ENCODE measurements at regions of chr2 and their contacts with region 1.

Region 1: GRCh38 chr2:100242891-100243619 is 79.2 kb downstream of the LONRF2 start:
- DNase-seq: peak in 1 of 2 donors; percentile 90
- H3K4me3 ChIP-seq: no peak overlapping the region
- CTCF ChIP-seq: no peak
- POLR2A ChIP-seq: no peak

Region 2: DNA sequence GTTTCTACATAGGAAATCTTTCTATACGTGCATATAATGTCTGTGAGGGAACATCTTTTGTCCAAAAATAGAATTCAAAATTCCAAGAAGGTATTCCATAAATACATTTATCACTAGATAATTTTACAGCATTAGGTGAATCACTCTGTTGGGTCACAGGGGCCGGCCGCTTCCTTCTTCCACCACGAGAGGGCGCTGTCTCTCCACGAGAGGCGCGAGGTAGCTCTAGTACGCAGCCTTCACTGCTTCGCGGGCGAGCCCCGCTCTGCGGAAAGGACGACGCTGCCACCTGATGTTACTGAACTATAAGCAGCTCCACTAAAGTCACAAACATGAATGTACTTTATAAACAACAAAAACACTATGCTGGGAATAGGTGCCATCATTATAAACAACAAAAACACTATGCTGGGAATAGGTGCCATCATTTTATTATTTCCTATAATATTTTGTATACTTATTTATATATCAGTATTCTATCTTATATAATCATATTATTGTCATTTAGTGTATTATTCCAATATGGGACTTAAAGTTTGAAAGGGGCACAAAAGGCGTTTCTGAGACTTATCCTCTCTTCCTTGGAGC is 683.9 kb before region 1 on chr2:
- intact Hi-C with region 1: loop called (anchors 5 kb)
- DNase-seq: peak; percentile 85 to 98
- H3K4me3 ChIP-seq: no peak overlapping the region
- CTCF ChIP-seq: peak in 1 of 3 donors; percentile 88
- POLR2A ChIP-seq: no peak

Region 3: DNA sequence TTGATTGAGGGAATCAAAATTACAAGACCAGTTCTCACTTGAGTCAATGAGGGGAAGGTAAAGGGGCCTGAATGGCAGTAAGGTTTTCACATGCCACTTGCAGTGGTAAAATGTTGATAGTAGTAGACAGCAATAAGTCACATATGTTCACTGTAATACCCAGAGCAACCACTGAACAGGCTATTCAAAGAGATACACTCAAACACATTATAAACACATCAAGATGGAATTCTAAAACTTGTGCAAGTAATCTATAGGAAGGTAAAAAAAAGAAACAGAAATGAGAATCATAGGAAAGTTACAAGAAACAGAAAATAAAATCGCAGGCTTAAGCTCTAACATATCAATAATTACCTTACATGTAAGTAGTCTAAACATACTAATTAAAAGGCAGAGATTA is 14.1 kb before region 1 on chr2:
- intact Hi-C with region 1: no loop called
- DNase-seq: no peak
- H3K4me3 ChIP-seq: no peak overlapping the region
- CTCF ChIP-seq: no peak
- POLR2A ChIP-seq: no peak

Region 4: DNA sequence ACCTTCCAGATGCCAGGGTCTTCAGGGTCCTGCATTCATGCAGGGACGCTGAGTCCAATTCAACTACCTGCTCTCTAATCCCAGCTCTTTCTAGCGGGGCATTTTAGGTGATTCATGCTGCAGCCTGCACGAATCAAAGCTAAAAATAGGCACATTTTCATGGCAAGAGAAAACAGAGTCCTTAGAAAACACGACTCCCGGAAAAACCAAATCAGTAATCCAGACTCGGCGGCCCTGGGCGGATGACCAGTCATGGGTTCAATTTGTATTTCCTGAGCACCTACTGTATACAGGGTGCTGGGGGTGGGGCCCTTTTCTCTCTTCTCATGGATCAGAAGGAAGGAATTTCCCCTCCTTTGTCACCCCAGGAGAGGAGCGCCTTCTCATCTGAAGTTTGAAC is 14.9 kb after region 1 on chr2:
- intact Hi-C with region 1: no loop called
- DNase-seq: no peak
- H3K4me3 ChIP-seq: no peak overlapping the region
- CTCF ChIP-seq: no peak
- POLR2A ChIP-seq: no peak

Measured in lower leg skin (tissue), 4 donors.